Activated naive CD4-positive, alpha-beta T cell treated with anti-CD3 and anti-CD28 coated beads for 36 hours (primary cell): ENCODE measurements at regions of chr7 and their contacts with region 1.

Region 1: GRCh38 chr7:69599955-69600709 is 1.9 kb downstream of the AUTS2 start:
- DNase-seq: no peak
- H3K4me3 Mint-ChIP-seq: peak overlapping the region; percentile 51
- H3K27ac Mint-ChIP-seq: no peak overlapping the region
- H3K4me1 Mint-ChIP-seq: peaks cover 10% of the 10 kb centered on the region
- H3K27me3 Mint-ChIP-seq: peaks cover 29% of the 10 kb centered on the region

Region 2: GRCh38 chr7:69517985-69518704 is 82.0 kb before region 1 on chr7:
- CTCF ChIA-PET with region 1: no interaction called
- intact Hi-C with region 1: no loop called
- DNase-seq: no peak
- H3K4me3 Mint-ChIP-seq: no peak overlapping the region
- H3K27ac Mint-ChIP-seq: no peak overlapping the region
- H3K4me1 Mint-ChIP-seq: no peaks in the 10 kb centered on the region
- H3K27me3 Mint-ChIP-seq: no peaks in the 10 kb centered on the region

Region 3: GRCh38 chr7:69739931-69740431 is 139.8 kb after region 1 on chr7:
- CTCF ChIA-PET with region 1: no interaction called
- intact Hi-C with region 1: loop called (anchors 5 kb)
- DNase-seq: no peak
- H3K4me3 Mint-ChIP-seq: no peak overlapping the region
- H3K27ac Mint-ChIP-seq: no peak overlapping the region
- H3K4me1 Mint-ChIP-seq: peaks cover 16% of the 10 kb centered on the region
- H3K27me3 Mint-ChIP-seq: peaks cover 5% of the 10 kb centered on the region

Region 4: DNA sequence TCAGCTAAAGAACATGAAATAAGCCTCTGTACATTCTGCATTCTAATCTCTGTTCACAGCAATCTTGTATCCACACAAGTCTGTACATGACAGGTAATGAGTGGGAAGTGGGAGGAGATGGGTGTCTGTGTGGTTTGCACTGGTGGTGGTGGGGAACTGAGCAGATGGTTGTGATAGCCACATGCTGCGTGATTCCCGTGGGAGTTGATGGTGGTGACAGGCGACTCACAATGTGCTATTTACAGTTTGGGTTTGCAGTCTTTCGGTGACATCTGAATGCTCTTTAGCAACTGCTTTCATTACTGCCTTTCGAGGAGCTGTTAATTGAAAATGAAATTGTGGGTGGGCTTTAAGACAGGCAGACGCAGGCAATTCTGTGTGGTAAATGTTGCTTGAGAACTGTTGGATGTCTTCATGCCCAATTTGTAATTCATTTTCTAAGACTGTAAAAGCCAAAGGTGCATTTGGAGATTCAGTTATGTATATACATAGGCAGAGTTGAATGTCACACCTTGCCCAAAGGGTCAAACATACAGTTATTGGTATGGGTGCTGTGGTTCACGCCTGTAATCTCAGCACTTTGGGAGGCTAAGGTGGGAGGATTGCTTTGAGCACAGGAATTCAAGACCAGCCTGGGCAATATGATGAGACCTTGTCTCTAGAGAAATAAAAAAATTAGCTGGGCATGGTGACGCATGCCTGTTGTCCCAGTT is 306.3 kb after region 1 on chr7:
- CTCF ChIA-PET with region 1: no interaction called
- intact Hi-C with region 1: no loop called
- DNase-seq: no peak
- H3K4me3 Mint-ChIP-seq: no peak overlapping the region
- H3K27ac Mint-ChIP-seq: no peak overlapping the region
- H3K4me1 Mint-ChIP-seq: no peaks in the 10 kb centered on the region
- H3K27me3 Mint-ChIP-seq: no peaks in the 10 kb centered on the region